Left lung (tissue), 14 donors: ENCODE measurements at regions of chr12 and their contacts with region 1.

Region 1: DNA sequence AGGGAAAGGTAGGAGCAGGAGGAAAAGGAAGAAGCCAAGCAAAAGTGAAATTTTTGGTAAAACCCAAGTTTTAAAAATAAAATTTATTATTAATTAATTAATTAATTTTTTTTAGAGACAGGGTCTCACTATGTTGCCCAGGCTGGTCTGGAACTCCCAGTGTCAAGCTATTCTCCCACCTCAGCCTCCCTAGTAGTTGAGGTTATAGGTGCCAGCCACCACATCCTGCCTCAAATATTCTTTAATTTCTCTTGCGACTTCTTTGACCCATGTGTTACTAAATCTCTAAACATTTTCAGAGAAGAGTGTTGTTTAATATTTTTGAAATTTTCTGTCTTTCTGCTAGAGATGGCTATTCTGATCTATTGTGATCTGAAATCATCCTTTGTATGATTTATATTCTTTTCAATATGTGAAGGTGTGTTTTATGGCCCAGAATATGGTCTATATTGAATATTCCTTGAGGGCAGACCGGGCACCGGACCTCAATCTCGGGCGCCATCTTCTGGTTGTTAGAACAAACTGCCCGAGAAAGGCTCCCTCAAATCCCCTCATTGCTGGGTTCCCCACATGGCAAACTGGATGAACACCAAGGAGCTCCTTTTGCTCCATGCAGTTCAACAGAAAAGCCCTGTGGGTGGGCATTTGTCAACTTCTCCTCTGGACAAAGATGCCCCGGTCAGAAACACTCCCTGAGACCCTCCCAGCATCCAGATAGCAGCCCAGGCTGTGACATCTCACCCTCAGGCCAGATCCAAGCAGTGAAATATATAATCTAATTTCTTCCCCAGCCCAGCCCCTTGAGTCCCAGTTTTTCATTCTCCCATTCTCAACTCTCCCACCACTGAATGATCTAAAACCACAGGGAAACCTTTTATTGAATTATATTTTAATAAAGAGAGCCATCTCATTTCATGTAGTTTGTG is 110.5 kb downstream of the ASCL4 start:
- DNase-seq: peak in 3 of 4 donors; percentile 39 to 66 (median 45)
- ATAC-seq: peak; percentile 95
- H3K4me3 ChIP-seq: no peak overlapping the region
- H3K27ac ChIP-seq: no peak overlapping the region
- H3K4me1 ChIP-seq: no peaks in the 10 kb centered on the region
- H3K27me3 ChIP-seq: peaks cover 0 to 11% of the 10 kb centered on the region in 2 donors
- CTCF ChIP-seq: peak; percentile 58 to 66

Region 2: DNA sequence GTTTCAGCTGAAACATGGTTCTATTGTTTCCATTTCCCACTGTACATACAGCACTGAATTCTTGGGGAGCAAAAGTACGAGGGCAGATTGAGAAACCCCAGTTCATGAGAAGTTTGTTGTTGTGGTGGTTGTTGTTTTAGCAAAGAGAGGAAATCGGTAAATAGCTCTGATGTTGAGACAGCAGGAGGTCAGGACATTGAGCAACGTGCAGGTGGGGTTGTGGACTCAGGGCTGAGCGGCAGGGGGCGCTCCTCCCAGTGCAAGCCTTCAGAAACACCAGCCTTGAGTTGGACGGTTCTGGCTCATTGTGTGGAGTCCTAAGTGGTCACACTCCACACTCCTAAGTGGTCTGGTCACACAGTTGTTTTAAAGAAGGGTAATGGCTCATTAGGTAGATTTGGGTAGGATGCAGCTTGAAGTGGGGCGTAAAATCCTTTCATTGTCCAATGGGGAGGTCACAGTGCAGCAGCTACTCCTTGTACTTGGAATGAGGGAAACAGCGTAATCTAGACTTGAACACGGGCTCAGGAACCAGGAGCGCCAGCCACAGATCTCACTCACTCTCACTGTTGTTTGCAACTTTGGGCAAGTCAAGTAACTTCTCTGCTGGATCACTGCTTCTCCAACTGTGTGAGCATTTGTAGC is 213.9 kb before region 1 on chr12:
- intact Hi-C with region 1: loop called in 1 of 2 experiments (anchors 10 kb)
- DNase-seq: no peak
- ATAC-seq: peak; percentile 79
- H3K4me3 ChIP-seq: no peak overlapping the region
- H3K27ac ChIP-seq: no peak overlapping the region
- H3K4me1 ChIP-seq: no peaks in the 10 kb centered on the region
- H3K27me3 ChIP-seq: peaks cover 0 to 51% of the 10 kb centered on the region in 2 donors
- CTCF ChIP-seq: peak; percentile 50 to 65

Region 3: DNA sequence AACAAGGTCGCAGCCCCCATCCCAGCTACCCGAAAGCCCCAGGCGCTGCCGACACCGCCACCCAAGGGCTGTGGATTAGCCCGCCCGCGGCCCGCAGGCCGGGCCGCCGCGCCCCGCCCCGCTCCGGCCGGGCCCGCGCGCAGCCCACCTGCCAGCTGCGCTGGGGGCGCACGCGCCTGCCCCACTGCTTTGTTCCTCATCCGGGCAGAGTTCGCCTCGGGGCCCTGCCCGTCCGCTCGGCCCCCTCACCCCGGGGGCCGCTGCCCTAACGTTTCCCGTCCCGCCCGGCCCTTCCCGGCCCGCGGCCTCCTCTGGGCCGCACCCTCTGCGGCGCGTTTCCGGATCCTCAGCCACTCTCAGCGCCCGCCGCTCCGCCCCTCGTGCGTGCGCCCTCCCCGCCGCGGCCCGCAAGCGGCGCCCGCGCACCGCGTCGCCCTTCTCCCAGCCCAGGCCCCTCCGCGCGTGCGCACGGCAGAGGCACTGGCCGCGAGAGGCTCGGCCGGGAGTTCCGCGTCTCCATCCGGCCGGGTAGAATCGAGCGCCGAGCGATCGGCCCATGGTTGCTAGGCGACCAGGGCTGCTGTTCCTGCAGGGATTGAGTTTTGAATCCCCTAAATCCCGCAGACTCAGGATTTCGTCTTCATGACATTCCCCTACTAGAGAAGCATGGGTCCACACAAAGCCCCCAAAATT is 124.1 kb before region 1 on chr12 and contains the start of gene PRDM4:
- intact Hi-C with region 1: loop called in 1 of 2 experiments (anchors 10 kb)
- DNase-seq: peak; percentile 94 to 97 (median 96)
- ATAC-seq: peak; percentile 98
- H3K4me3 ChIP-seq: peak within 1 kb of the TSS; percentile 80 to 90
- H3K27ac ChIP-seq: peak within 1 kb of the TSS; percentile 69 to 76
- H3K4me1 ChIP-seq: peaks cover 15 to 34% of the 10 kb centered on the region in 2 donors
- H3K27me3 ChIP-seq: no peaks in the 10 kb centered on the region
- CTCF ChIP-seq: peak; percentile 33 to 35
- polyA plus RNA-seq, gene PRDM4: 24.1 to 27.3 (median 25.7) TPM